ENCODE measurements at regions of chr13 and their contacts with region 1.

Region 1: DNA sequence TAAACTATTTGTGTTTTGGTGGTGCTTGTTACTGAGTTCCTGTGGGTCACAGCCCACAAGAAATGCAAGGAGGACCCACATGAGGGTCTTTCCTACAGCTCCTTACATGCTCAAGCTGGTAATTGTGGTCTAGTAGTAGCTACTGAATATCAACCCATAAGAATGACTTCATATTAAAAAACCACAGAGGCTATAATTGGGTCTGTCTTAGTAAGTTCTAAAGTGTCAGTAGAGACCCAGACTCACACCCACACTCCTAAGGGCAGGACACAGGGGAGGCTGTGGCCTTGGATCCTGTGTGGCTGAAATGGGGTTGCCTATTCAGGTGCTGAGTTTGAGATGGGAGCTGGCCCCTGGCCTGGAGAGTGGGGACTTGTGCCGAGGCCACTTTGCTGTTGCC is 19.6 kb downstream of the TFDP1 start:
- DNase-seq: no peak
- H3K4me3 ChIP-seq: no peak overlapping the region
- H3K4me3 Mint-ChIP-seq: no peak overlapping the region
- H3K27ac Mint-ChIP-seq: no peak overlapping the region
- H3K4me1 ChIP-seq: no peaks in the 10 kb centered on the region
- H3K4me1 Mint-ChIP-seq: peaks cover 7% of the 10 kb centered on the region
- H3K27me3 ChIP-seq: no peaks in the 10 kb centered on the region
- H3K27me3 Mint-ChIP-seq: no peaks in the 10 kb centered on the region
- CTCF ChIP-seq: no peak

Region 2: GRCh38 chr13:113245849-113246791 is 358.1 kb before region 1 on chr13:
- CTCF ChIA-PET with region 1: no interaction called
- POLR2A ChIA-PET with region 1: no interaction called
- intact Hi-C with region 1: no loop called
- DNase-seq: peak in 1 of 2 experiments; percentile 52
- H3K4me3 ChIP-seq: no peak overlapping the region
- H3K4me3 Mint-ChIP-seq: no peak overlapping the region
- H3K27ac Mint-ChIP-seq: no peak overlapping the region
- H3K4me1 ChIP-seq: no peaks in the 10 kb centered on the region
- H3K4me1 Mint-ChIP-seq: peaks cover 8% of the 10 kb centered on the region
- H3K27me3 ChIP-seq: no peaks in the 10 kb centered on the region
- H3K27me3 Mint-ChIP-seq: no peaks in the 10 kb centered on the region
- CTCF ChIP-seq: peak; percentile 48 to 75

Region 3: DNA sequence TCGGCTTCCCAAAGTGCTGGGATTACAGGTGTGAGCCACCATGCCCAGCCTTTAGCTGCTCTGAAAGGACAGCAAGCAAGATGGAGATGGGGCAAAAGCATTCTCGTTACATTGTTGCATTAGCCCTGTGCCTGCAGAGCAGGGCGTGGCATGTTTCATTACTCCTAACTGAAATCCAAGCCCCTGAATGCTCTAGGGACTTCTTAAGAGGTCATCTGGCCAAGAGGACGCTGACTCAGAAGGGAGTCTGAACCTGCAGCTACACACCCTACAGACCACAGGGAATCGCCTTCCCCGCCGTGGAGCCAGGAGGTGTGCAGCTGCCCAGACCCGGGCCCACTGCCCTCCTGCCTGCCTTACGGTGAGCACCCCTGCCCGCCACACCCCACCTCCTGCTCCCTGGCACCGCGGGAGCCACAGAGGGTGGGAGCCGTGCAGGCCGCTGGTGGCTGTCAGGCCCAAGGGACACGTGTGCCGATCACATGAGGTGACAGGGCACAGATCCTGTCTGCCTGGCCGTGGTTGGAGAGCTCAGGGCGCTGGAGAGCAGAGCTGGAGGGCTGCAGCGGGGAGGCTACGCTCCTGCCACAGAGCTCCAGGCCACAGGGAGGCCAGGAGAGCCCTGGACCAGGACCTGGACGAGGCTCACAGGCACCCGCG is 178.1 kb before region 1 on chr13:
- CTCF ChIA-PET with region 1: no interaction called
- POLR2A ChIA-PET with region 1: no interaction called
- intact Hi-C with region 1: no loop called
- DNase-seq: no peak
- H3K4me3 ChIP-seq: no peak overlapping the region
- H3K4me3 Mint-ChIP-seq: no peak overlapping the region
- H3K27ac Mint-ChIP-seq: no peak overlapping the region
- H3K4me1 ChIP-seq: peaks cover 10% of the 10 kb centered on the region
- H3K4me1 Mint-ChIP-seq: no peaks in the 10 kb centered on the region
- H3K27me3 ChIP-seq: no peaks in the 10 kb centered on the region
- H3K27me3 Mint-ChIP-seq: no peaks in the 10 kb centered on the region
- CTCF ChIP-seq: no peak

Region 4: DNA sequence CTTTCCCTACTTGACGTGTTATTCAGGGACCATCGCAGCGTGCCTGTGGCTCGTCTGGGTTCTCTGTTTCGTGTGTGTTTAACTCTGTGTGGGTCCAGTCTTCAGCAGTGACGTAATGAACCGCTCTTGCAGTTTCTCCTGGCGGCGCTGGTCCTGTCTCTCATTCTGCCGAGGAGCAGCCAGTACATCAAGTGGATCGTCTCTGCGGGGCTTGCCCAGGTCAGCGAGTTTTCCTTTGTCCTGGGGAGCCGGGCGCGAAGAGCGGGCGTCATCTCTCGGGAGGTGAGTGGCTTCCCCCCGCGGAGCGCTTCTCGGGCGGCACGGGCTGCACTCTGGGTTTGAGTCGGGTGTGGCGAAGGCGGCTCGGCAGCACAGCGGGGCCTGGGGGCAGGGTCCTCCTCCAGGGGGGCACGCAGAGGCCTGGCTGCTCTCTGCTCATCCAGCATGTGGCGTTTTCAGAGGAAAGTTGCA is 56.0 kb before region 1 on chr13:
- CTCF ChIA-PET with region 1: no interaction called
- POLR2A ChIA-PET with region 1: no interaction called
- intact Hi-C with region 1: no loop called
- DNase-seq: no peak
- H3K4me3 ChIP-seq: no peak overlapping the region
- H3K4me3 Mint-ChIP-seq: no peak overlapping the region
- H3K27ac Mint-ChIP-seq: no peak overlapping the region
- H3K4me1 ChIP-seq: peaks cover 18% of the 10 kb centered on the region
- H3K4me1 Mint-ChIP-seq: no peaks in the 10 kb centered on the region
- H3K27me3 ChIP-seq: no peaks in the 10 kb centered on the region
- H3K27me3 Mint-ChIP-seq: no peaks in the 10 kb centered on the region
- CTCF ChIP-seq: no peak

Region 5: GRCh38 chr13:113592571-113592970 is 11.6 kb before region 1 on chr13:
- CTCF ChIA-PET with region 1: no interaction called
- POLR2A ChIA-PET with region 1: no interaction called
- intact Hi-C with region 1: no loop called
- DNase-seq: peak in 1 of 2 experiments; percentile 29
- H3K4me3 ChIP-seq: no peak overlapping the region
- H3K4me3 Mint-ChIP-seq: no peak overlapping the region
- H3K27ac Mint-ChIP-seq: no peak overlapping the region
- H3K4me1 ChIP-seq: no peaks in the 10 kb centered on the region
- H3K4me1 Mint-ChIP-seq: peaks cover 7% of the 10 kb centered on the region
- H3K27me3 ChIP-seq: no peaks in the 10 kb centered on the region
- H3K27me3 Mint-ChIP-seq: no peaks in the 10 kb centered on the region
- CTCF ChIP-seq: no peak

Region 6: GRCh38 chr13:113890774-113891480 is 286.7 kb after region 1 on chr13:
- CTCF ChIA-PET with region 1: no interaction called
- POLR2A ChIA-PET with region 1: no interaction called
- intact Hi-C with region 1: loop called (anchors 5 kb)
- DNase-seq: no peak
- H3K4me3 ChIP-seq: no peak overlapping the region
- H3K4me3 Mint-ChIP-seq: no peak overlapping the region
- H3K27ac Mint-ChIP-seq: no peak overlapping the region
- H3K4me1 ChIP-seq: no peaks in the 10 kb centered on the region
- H3K4me1 Mint-ChIP-seq: no peaks in the 10 kb centered on the region
- H3K27me3 ChIP-seq: no peaks in the 10 kb centered on the region
- H3K27me3 Mint-ChIP-seq: peaks cover 15% of the 10 kb centered on the region
- CTCF ChIP-seq: no peak

Measured in Caco-2 (cell line).